ENCODE measurements at regions of chr18 and their contacts with region 1.

Region 1: DNA sequence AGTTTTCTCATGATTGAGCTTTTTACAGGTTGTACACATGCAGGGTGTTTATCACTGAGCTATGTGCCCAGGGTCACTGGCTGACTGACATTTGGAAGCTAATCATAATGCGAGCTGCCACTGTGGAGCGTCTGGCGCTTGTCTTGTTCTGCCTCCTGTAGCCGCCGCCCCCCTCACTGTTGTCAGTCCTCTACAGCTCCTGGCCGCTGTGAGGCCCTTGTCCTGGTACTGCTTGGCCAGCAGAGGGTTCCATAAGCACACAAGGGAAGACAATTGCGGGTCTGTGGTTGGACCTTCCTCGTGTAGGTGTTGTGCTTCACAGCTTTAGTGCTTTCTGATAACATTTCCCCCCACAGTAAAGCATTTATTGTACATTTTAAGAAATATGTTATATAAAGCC is 105.6 kb upstream of the LDLRAD4 start:
- DNase-seq: peak; percentile 41 to 91 (median 47)
- H3K4me3 ChIP-seq: no peak overlapping the region
- H3K27ac ChIP-seq: no peak overlapping the region
- H3K4me1 ChIP-seq: no peaks in the 10 kb centered on the region
- H3K27me3 ChIP-seq: no peaks in the 10 kb centered on the region
- CTCF ChIP-seq: peak in 4 of 6 experiments; percentile 18 to 54 (median 49)
- POLR2A ChIP-seq: no peak

Region 2: DNA sequence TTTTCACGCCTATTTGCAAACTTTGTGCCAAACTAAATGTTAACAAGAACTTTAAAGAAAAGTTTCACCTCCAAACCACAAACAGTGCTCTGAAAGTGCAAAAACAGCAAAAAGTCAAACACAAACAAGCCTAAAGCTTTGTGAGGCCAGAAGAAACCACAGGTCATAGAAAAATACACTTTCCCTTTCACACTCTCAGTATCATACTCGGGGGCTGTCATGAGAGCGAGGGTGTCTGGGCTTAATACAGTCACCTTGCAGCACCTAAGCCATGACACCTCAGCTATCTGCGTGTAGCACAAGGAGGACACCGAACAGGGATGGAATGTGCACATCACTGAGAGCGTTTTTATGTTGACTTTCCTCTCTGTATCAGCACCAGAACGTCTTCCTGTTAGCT is 191.8 kb before region 1 on chr18:
- intact Hi-C with region 1: no loop called
- DNase-seq: no peak
- H3K4me3 ChIP-seq: no peak overlapping the region
- H3K27ac ChIP-seq: no peak overlapping the region
- H3K4me1 ChIP-seq: no peaks in the 10 kb centered on the region
- H3K27me3 ChIP-seq: no peaks in the 10 kb centered on the region
- CTCF ChIP-seq: no peak
- POLR2A ChIP-seq: no peak

Region 3: GRCh38 chr18:13166023-13166422 is 53.0 kb after region 1 on chr18:
- intact Hi-C with region 1: loop called in 1 of 2 experiments (anchors 10 kb)
- DNase-seq: no peak
- H3K4me3 ChIP-seq: no peak overlapping the region
- H3K27ac ChIP-seq: no peak overlapping the region
- H3K4me1 ChIP-seq: no peaks in the 10 kb centered on the region
- H3K27me3 ChIP-seq: no peaks in the 10 kb centered on the region
- CTCF ChIP-seq: no peak
- POLR2A ChIP-seq: no peak

Measured in adrenal gland (tissue), 19 donors.